Caco-2 (cell line): ENCODE measurements at regions of chr1 and their contacts with region 1.

Region 1: DNA sequence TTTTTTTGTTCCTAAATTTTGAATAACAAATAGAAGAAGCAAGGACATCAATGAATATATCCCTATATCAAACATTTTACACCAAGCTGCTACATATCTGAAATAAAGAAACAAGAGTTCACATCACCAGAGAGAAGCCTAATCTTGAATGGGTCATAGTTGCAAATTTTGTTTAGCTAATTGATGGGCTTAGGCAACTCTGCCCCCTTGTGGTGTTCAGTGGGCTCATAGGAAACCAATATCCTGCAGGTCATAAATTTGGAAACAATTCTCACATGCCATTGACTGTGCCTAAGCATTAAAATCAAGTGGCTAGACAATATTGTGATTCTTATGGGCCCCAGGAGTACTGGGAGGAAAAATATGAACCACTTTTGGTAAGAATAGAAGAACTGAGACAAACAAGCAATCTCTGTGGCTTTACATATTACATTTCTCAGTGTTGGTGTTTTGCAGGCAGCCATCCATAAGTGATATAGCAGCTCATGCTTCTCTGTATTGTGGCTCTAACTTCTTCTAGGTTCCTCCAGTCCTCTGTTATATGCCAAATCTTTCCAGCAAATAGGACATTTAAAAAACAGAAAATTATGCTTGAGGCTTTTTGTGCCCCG is 1262.8 kb upstream of the PRMT6 start:
- DNase-seq: peak; percentile 32 to 36
- H3K4me3 ChIP-seq: no peak overlapping the region
- H3K4me3 Mint-ChIP-seq: no peak overlapping the region
- H3K27ac Mint-ChIP-seq: no peak overlapping the region
- H3K4me1 ChIP-seq: no peaks in the 10 kb centered on the region
- H3K4me1 Mint-ChIP-seq: no peaks in the 10 kb centered on the region
- H3K27me3 ChIP-seq: no peaks in the 10 kb centered on the region
- H3K27me3 Mint-ChIP-seq: no peaks in the 10 kb centered on the region
- CTCF ChIP-seq: peak; percentile 48 to 57

Region 2: DNA sequence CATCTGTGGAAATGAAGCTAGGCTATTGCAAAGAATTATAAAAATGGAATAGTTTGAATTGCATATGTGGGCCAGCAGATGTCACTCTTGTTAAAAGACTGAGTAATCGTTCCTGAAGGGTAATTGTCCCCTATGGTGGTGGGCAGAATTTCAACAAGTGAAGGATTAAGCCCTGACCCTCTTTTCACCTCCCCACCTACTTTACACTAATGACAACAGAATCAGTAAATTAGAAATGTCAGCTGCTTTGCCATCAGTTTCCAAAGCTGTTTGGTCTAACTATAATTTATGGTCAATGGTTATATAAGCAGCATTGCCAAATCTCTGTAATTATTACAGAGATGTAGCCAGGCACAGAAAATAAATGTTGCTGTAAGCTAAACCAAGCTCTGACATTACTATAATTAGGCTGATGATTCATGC is 1145.4 kb before region 1 on chr1:
- CTCF ChIA-PET with region 1: no interaction called
- POLR2A ChIA-PET with region 1: no interaction called
- intact Hi-C with region 1: loop called (anchors 2 kb)
- DNase-seq: peak in 1 of 2 experiments; percentile 11
- H3K4me3 ChIP-seq: no peak overlapping the region
- H3K4me3 Mint-ChIP-seq: no peak overlapping the region
- H3K27ac Mint-ChIP-seq: no peak overlapping the region
- H3K4me1 ChIP-seq: no peaks in the 10 kb centered on the region
- H3K4me1 Mint-ChIP-seq: no peaks in the 10 kb centered on the region
- H3K27me3 ChIP-seq: no peaks in the 10 kb centered on the region
- H3K27me3 Mint-ChIP-seq: no peaks in the 10 kb centered on the region
- CTCF ChIP-seq: peak; percentile 35 to 38